ENCODE measurements at regions of chr20 and their contacts with region 1.

Region 1: DNA sequence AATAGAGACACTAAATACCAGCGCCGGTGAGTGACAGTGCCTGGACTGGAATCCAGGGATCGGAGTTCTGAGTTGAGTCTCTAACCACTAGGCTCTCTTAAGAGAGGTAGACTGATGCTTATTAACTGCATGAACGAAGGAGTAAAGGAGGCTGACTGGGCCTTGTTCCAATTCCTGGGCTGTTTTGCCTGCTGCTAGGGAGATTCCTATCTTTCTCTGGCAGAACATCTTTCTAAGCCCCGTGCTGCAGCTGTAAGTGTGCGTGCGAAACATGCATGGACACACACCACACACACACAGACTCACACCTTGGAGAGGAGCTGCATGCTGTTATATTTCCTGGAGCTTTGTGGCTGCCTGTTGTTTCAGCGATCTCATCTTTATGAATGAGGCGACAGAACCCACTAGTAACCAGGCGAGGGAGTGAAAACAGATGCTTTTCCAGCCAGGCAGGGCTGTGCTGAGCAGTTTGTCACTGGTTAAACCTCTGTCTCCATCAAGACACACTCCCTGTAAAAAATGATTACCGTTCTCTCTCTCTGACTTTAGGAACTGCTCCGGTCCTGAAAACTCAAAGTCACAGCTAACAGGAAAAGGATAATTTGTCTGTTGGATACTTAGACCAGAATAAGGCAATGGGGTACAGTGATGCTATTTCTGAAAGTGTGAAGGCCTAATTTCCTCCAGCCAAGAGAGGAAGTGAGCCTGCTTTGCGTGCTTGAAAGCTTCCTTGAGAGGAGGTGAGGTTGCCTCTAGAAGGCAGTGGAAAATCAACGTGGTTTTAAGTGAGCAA is 157.4 kb upstream of the ZNF217 start:
- DNase-seq: peak in 4 of 5 donors; percentile 28 to 54 (median 40)
- H3K4me3 ChIP-seq: no peak overlapping the region
- H3K4me3 Mint-ChIP-seq: peak overlapping the region in 7 of 8 donors; percentile 52 to 82 (median 76)
- H3K27ac ChIP-seq: peak overlapping the region; percentile 55
- H3K27ac Mint-ChIP-seq: peak overlapping the region; percentile 86 to 98 (median 95)
- H3K4me1 ChIP-seq: peaks cover 63% of the 10 kb centered on the region
- H3K4me1 Mint-ChIP-seq: peaks cover 48 to 72% (median 63%) of the 10 kb centered on the region in 4 donors
- H3K27me3 ChIP-seq: no peaks in the 10 kb centered on the region
- H3K27me3 Mint-ChIP-seq: no peaks in the 10 kb centered on the region

Region 2: DNA sequence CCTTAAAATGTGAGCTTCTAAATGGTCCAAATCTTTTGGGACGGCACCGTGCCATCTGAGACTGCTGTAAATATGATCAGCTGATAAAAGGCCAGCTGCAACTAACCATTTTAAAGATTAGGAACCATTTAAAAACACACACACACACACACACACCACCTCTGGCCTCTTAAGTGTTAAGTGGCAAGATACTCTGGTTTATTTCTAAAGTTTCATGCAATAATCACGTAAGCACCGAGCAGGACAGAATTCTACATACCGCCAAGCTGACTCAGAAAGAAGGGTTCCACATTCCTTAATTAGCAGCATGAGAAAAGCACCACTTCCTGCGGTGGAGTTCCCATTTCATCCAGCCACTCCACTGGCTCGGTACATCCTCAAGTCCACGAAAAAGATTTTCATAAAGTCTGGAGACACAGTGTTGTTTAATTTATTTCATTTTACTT is 139.6 kb before region 1 on chr20:
- CTCF ChIA-PET with region 1: no interaction called
- POLR2A ChIA-PET with region 1: interaction called, 14 read pairs
- intact Hi-C with region 1: no loop called
- DNase-seq: no peak
- H3K4me3 ChIP-seq: no peak overlapping the region
- H3K4me3 Mint-ChIP-seq: no peak overlapping the region
- H3K27ac ChIP-seq: no peak overlapping the region
- H3K27ac Mint-ChIP-seq: peak overlapping the region in 2 of 7 donors; percentile 13 to 73
- H3K4me1 ChIP-seq: peaks cover 33% of the 10 kb centered on the region
- H3K4me1 Mint-ChIP-seq: peaks cover 13 to 28% (median 22%) of the 10 kb centered on the region in 4 donors
- H3K27me3 ChIP-seq: no peaks in the 10 kb centered on the region
- H3K27me3 Mint-ChIP-seq: no peaks in the 10 kb centered on the region

Region 3: DNA sequence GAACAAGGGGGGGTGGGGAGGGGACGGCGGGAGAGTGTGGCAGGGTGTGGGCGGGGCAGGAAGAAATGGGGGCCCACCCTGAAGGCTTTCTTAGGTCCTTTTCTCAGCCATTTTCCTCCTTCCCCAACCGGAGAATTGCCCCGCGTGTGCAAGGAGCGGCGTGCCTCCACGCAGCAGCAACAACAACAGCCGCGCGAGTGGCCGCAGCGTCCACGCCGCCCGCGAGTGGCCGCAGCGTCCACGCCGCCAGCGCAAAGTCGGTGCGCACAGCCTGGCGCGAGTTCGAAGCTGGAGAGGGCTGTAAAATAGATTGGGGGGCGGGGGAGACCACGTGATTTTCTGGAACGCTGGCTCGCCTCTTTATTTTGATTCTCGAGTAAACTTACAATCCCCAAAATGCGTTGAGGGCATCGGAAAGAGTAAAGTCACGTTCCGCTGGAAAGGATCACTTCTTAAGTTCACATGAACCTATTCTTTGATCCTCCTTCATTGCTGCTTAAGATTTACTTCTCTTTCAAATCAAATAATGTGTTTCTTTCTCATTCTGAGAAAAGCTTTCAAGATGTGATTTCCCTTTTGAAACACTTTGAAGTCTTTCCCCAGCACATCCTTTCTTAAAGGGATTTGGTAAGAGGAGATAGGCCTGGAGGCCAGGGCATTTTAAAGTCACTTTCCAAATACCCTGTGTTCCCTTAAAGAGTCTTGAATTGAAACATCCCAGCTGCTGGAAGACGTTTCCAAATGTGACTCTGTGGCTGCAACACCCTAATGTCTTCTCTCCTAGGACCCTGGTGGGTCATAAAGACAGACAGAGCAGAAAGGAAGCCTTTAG is 90.7 kb before region 1 on chr20:
- CTCF ChIA-PET with region 1: interaction called, 3 read pairs
- POLR2A ChIA-PET with region 1: interaction called, 5 read pairs
- intact Hi-C with region 1: loop called (anchors 5 kb)
- DNase-seq: peak in 2 of 5 donors; percentile 16 to 18
- H3K4me3 ChIP-seq: peak overlapping the region; percentile 56 to 66
- H3K4me3 Mint-ChIP-seq: peak overlapping the region; percentile 77 to 91 (median 88)
- H3K27ac ChIP-seq: peak overlapping the region; percentile 41
- H3K27ac Mint-ChIP-seq: peak overlapping the region; percentile 63 to 93 (median 89)
- H3K4me1 ChIP-seq: peaks cover 46% of the 10 kb centered on the region
- H3K4me1 Mint-ChIP-seq: peaks cover 36 to 70% (median 50%) of the 10 kb centered on the region in 4 donors
- H3K27me3 ChIP-seq: no peaks in the 10 kb centered on the region
- H3K27me3 Mint-ChIP-seq: no peaks in the 10 kb centered on the region

Region 4: DNA sequence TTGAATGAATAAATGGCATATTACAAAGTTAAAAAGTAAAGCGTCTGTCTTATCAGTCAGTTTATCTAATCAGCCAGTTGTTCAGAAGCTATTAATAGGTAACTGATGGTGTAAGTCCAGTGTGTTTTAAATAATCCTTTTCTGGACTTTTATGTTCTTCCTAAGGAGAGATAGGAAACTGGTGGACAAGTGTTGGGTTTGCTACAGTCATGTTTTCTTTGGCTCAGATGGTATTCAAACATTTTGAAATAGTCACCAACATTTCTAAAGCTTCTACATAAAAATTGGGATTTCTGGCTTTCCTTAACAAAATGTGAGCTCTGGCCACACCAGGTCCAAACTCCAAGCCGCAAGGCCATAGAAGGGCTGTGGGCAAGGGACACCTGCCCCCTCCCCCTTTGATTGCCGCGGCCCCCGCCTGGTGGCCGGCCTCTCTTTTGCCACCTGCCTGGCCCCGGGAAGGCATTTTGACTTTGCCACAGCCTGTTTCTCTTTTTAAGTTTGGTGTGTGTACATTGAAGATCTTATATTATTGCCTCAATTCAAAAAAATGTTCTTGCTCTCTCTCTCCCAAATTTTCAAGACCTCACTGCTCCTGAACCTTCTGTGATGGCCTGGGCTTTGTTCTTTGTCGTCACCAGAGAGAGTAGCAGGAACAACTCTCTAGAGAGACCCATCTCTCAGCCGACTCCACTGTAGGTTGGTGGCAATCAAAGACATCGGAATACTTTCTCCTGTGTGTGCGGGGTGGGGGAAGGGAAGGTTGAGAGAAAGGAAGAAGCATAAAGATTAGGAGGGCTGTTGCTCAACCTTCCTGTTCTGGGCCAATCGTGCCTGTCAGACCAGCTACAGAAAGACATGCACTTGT is 73.3 kb before region 1 on chr20:
- CTCF ChIA-PET with region 1: no interaction called
- POLR2A ChIA-PET with region 1: no interaction called
- intact Hi-C with region 1: no loop called
- DNase-seq: no peak
- H3K4me3 ChIP-seq: no peak overlapping the region
- H3K4me3 Mint-ChIP-seq: peak overlapping the region in 3 of 8 donors; percentile 36 to 68 (median 65)
- H3K27ac ChIP-seq: no peak overlapping the region
- H3K27ac Mint-ChIP-seq: peak overlapping the region in 4 of 7 donors; percentile 44 to 57 (median 47)
- H3K4me1 ChIP-seq: peaks cover 6% of the 10 kb centered on the region
- H3K4me1 Mint-ChIP-seq: peaks cover 5 to 13% (median 9%) of the 10 kb centered on the region in 4 donors
- H3K27me3 ChIP-seq: no peaks in the 10 kb centered on the region
- H3K27me3 Mint-ChIP-seq: no peaks in the 10 kb centered on the region

Region 5: DNA sequence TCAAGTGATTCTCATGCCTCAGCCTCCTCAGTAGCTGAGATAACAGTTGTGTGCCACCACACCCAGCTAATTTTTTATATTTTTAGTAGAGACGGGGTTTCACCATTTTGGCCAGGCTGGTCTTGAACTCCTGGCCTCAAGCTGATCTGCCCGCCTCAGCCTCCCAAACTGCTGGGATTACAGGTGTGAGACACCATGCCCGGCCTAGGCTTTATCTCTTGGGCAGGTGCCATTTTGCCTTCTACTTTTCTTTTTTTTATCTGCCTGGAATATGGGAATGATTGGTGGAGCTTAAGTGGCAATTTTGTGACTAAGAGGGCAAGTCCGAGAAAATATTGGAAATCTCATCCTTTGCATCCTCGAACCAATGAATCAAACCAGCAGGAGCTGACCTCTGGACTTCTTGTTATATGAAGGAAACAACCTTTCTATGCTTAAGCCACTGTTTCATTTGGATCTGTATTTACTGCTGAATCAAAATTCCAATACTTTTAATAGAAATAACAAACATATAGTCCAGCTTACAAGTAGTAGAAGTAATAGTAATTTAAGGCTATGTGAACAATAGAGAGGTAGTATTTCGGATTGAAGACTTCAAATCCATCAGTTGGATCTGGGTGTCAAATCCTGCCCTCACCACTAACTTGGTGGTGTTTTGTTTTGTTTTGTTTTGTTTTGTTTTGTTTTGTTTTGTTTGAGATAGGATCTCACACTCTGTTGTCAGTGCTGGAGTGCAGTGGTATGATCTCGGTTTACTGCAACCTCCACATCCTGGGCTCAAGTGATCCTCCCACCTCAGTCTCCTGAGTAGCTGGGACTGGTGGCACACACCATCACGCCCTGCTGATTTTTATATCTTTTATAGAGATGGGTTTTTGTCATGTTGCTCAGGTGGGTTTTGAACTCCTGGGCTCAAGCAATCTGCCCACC is 28.2 kb before region 1 on chr20:
- CTCF ChIA-PET with region 1: no interaction called
- POLR2A ChIA-PET with region 1: no interaction called
- intact Hi-C with region 1: no loop called
- DNase-seq: no peak
- H3K4me3 ChIP-seq: no peak overlapping the region
- H3K4me3 Mint-ChIP-seq: no peak overlapping the region
- H3K27ac ChIP-seq: no peak overlapping the region
- H3K27ac Mint-ChIP-seq: no peak overlapping the region
- H3K4me1 ChIP-seq: no peaks in the 10 kb centered on the region
- H3K4me1 Mint-ChIP-seq: peaks cover 5 to 11% (median 7%) of the 10 kb centered on the region in 4 donors
- H3K27me3 ChIP-seq: no peaks in the 10 kb centered on the region
- H3K27me3 Mint-ChIP-seq: no peaks in the 10 kb centered on the region

Region 6: DNA sequence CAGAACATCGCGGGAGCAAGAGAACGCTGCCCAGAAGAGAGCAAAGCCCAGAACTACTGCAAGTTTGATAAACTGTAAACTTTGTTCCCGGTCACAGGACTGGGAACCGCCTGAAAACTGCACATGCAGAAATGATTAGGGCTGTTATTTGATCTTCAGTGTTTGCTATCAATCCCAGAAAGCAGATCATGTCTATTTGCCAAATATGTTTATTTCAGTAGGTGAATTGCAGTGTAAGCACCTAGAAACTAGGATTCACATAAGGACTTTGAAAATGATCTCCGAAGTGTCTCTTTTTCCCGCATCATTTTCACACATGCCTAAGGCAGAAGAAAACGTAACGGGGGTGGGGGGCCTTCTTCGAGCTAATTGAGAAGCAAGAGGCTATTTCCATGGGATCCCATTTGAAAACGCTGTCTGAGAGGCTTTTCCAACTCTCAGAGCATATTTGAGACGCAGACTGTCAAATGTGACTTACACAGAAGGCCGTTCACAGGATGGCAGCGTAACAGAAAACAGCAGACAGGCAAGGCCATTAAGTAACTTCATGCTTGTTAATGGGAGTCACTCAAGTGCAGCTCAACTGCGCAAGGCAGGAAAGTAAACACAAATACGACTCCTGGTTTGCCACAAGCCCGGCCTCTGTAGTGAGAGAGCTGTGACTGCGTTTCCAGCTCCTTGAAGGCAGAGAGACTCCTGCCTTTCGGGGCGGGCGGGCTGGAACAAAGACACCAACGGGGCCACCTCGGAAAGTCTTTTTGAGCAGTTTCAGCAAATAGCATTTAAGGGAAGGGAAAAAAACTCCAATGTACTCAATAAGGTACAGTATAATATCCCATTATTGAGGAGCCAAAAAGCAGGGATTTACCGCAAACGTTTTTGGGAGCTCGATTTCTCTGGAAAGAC is 12.7 kb before region 1 on chr20:
- CTCF ChIA-PET with region 1: interaction called, 4 read pairs
- POLR2A ChIA-PET with region 1: interaction called, 19 read pairs
- intact Hi-C with region 1: no loop called
- DNase-seq: no peak
- H3K4me3 ChIP-seq: no peak overlapping the region
- H3K4me3 Mint-ChIP-seq: no peak overlapping the region
- H3K27ac ChIP-seq: no peak overlapping the region
- H3K27ac Mint-ChIP-seq: peak overlapping the region in 2 of 7 donors; percentile 7 to 42
- H3K4me1 ChIP-seq: peaks cover 26% of the 10 kb centered on the region
- H3K4me1 Mint-ChIP-seq: peaks cover 26 to 51% (median 32%) of the 10 kb centered on the region in 4 donors
- H3K27me3 ChIP-seq: no peaks in the 10 kb centered on the region
- H3K27me3 Mint-ChIP-seq: no peaks in the 10 kb centered on the region

Region 7: DNA sequence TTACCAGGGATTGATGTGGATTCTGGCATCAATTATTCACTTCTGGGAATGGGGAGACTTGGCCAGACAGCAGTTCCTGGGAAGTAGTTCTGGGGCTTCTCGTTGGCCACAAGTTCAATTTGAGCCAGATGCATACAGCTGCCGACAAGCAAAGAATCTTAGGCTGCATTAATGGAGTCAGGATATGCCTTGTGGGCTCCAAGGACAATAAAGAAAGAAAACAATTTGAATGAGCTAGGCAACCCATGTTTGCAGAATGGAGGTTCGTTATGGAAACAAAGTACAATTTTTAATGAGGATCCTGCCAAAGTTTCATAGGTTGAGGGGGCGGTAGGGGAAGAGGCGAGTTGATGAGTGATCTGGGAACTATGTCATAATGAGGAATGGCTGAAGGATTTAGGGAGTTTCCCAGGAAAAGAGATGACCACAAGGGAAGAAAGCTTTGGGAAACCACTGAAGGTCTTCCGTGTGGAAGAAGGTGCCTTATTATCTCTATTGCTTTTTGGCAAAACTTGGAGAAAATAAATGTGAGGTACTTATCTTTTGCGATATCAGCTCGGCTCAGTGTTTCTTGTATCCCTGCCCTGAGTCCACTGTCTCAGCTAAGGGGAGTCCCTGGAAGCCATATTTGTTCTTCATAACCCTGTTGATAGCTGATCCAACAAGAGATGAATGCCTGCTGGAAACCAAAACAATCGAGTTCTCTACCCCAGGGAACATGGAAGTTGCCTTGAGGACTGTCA is 23.6 kb after region 1 on chr20:
- CTCF ChIA-PET with region 1: no interaction called
- POLR2A ChIA-PET with region 1: no interaction called
- intact Hi-C with region 1: no loop called
- DNase-seq: no peak
- H3K4me3 ChIP-seq: no peak overlapping the region
- H3K4me3 Mint-ChIP-seq: no peak overlapping the region
- H3K27ac ChIP-seq: no peak overlapping the region
- H3K27ac Mint-ChIP-seq: no peak overlapping the region
- H3K4me1 ChIP-seq: no peaks in the 10 kb centered on the region
- H3K4me1 Mint-ChIP-seq: peaks cover 0 to 3% (median under 1%) of the 10 kb centered on the region in 4 donors
- H3K27me3 ChIP-seq: no peaks in the 10 kb centered on the region
- H3K27me3 Mint-ChIP-seq: no peaks in the 10 kb centered on the region

Region 8: GRCh38 chr20:53839423-53840176 is 88.6 kb after region 1 on chr20:
- CTCF ChIA-PET with region 1: no interaction called
- POLR2A ChIA-PET with region 1: interaction called, 11 read pairs
- intact Hi-C with region 1: no loop called
- DNase-seq: peak; percentile 70 to 80 (median 77)
- H3K4me3 ChIP-seq: no peak overlapping the region
- H3K4me3 Mint-ChIP-seq: peak overlapping the region; percentile 33 to 98 (median 82)
- H3K27ac ChIP-seq: peak overlapping the region; percentile 44
- H3K27ac Mint-ChIP-seq: peak overlapping the region; percentile 75 to 100 (median 99)
- H3K4me1 ChIP-seq: peaks cover 89% of the 10 kb centered on the region
- H3K4me1 Mint-ChIP-seq: peaks cover 45 to 82% (median 64%) of the 10 kb centered on the region in 4 donors
- H3K27me3 ChIP-seq: no peaks in the 10 kb centered on the region
- H3K27me3 Mint-ChIP-seq: no peaks in the 10 kb centered on the region

Region 9: GRCh38 chr20:53907968-53908751 is 157.1 kb after region 1 on chr20:
- CTCF ChIA-PET with region 1: no interaction called
- POLR2A ChIA-PET with region 1: no interaction called
- intact Hi-C with region 1: no loop called
- DNase-seq: no peak
- H3K4me3 ChIP-seq: no peak overlapping the region
- H3K4me3 Mint-ChIP-seq: no peak overlapping the region
- H3K27ac ChIP-seq: no peak overlapping the region
- H3K27ac Mint-ChIP-seq: no peak overlapping the region
- H3K4me1 ChIP-seq: no peaks in the 10 kb centered on the region
- H3K4me1 Mint-ChIP-seq: peaks cover 2 to 7% (median 6%) of the 10 kb centered on the region in 4 donors
- H3K27me3 ChIP-seq: no peaks in the 10 kb centered on the region
- H3K27me3 Mint-ChIP-seq: no peaks in the 10 kb centered on the region

Measured in CD4-positive, alpha-beta memory T cell (primary cell).